ENCODE measurements at regions of chr7 and their contacts with region 1.

Region 1: DNA sequence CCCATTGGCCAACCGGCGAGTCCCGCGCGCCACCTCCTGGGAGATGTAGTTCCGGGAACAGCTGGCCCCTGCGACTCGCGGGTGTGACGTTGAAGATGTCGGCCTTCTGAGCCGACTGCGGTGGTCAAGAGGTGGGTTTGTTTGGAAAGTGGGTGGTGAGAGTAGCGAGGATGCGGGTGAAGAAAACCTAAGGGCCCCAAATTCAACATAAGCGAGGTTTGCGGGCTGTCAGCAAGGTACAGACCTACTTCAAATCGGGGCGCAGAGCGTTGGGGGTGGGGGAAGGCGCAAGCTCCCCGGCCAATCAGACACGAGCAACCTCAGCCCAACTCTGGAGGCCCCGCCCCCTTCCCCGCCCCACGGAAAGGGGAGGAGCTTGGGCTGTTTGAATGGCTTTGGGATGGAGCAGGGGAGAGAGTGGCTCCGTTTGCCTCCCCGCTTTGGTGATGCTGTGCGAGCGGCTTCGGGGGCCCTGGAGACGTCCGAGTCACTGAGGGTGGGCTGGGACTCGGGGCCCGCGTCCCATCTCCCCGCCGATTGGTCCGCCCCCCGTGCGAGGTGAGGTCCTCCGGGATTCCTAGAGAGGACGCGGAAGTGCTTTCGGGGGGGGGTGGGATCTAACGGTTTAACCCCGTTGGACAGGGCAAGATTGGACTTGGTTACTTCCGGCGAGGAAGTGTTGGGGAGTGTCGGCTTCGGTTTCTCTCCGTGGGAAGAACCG is at the start of gene ZKSCAN5:
- DNase-seq: peak; percentile 94
- ATAC-seq: peak; percentile 81
- H3K4me3 ChIP-seq: peak within 1 kb of the TSS; percentile 87 to 95
- H3K27ac ChIP-seq: peak within 1 kb of the TSS; percentile 82
- H3K4me1 ChIP-seq: peaks cover 11 to 23% of the 10 kb centered on the region in 2 experiments; a peak in 3 of 4 replicates
- H3K27me3 ChIP-seq: no peaks in the 10 kb centered on the region
- CTCF ChIP-seq: no peak
- POLR2A ChIP-seq: peak; percentile 76
- RAD21 ChIP-seq: no peak
- total RNA-seq, gene ZKSCAN5: 10.2 TPM

Region 2: GRCh38 chr7:99472561-99473243 is 32.1 kb before region 1 on chr7 and contains the start of gene ZNF789:
- CTCF ChIA-PET with region 1: interaction called, 3 read pairs
- POLR2A ChIA-PET with region 1: interaction called, 6 read pairs
- RAD21 ChIA-PET with region 1: no interaction called
- intact Hi-C with region 1: loop called (anchors 2 kb)
- DNase-seq: peak; percentile 92
- ATAC-seq: peak; percentile 95
- H3K4me3 ChIP-seq: peak within 1 kb of the TSS; percentile 81
- H3K27ac ChIP-seq: peak within 1 kb of the TSS; percentile 93
- H3K4me1 ChIP-seq: peaks cover 0 to 13% of the 10 kb centered on the region in 2 experiments; a peak in 2 of 4 replicates
- H3K27me3 ChIP-seq: no peaks in the 10 kb centered on the region
- CTCF ChIP-seq: no peak
- POLR2A ChIP-seq: peak; percentile 74
- RAD21 ChIP-seq: no peak
- total RNA-seq, gene ZNF789: 8.2 TPM

Region 3: DNA sequence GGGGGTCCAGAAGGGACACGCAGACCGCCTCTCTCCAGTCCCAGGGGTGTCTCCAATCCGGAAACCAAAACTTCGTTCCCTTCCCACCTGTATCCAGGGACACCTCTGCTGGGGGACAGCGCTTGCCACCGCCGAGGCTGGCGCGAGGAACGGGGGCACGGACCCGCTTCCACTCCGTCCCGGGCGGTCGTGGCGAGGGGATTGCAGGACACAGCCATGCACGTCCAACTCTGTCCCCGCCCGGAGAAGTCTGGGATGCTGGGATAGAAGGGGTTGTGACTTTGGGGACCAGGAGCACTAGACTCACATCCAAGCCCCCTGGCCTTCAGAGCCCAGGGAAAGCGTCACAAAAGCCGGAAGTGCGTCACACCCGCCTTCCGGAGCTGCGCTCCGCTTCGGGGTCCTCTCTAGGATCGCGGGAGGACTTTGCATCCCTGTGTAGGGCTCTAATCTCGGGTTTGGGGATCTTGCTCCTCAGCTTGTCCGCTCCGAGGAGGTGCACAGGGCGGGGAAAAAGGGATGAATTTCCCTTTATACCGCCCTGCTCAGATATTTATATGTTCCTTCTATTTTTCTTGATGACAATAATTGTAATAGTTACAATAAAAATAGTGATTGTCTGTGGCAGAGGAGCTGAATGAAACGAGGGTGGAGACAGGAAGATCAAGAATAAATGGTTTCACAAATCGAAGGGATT is 47.2 kb after region 1 on chr7 and contains the start of gene FAM200A:
- CTCF ChIA-PET with region 1: no interaction called
- POLR2A ChIA-PET with region 1: interaction called, 3 read pairs
- RAD21 ChIA-PET with region 1: no interaction called
- intact Hi-C with region 1: loop called (anchors 2 kb)
- DNase-seq: peak; percentile 92
- ATAC-seq: peak; percentile 98
- H3K4me3 ChIP-seq: peak within 1 kb of the TSS; percentile 69 to 79
- H3K27ac ChIP-seq: peak within 1 kb of the TSS; percentile 38
- H3K4me1 ChIP-seq: peaks cover 3 to 17% of the 10 kb centered on the region in 2 experiments; a peak in 3 of 4 replicates
- H3K27me3 ChIP-seq: no peaks in the 10 kb centered on the region
- CTCF ChIP-seq: no peak
- POLR2A ChIP-seq: peak; percentile 88
- RAD21 ChIP-seq: no peak
- total RNA-seq, gene FAM200A: 4.7 TPM

Region 4: GRCh38 chr7:99843808-99844207 is 339.0 kb after region 1 on chr7:
- CTCF ChIA-PET with region 1: no interaction called
- POLR2A ChIA-PET with region 1: no interaction called
- RAD21 ChIA-PET with region 1: no interaction called
- intact Hi-C with region 1: no loop called
- DNase-seq: no peak
- ATAC-seq: no peak
- H3K4me3 ChIP-seq: no peak overlapping the region
- H3K27ac ChIP-seq: no peak overlapping the region
- H3K4me1 ChIP-seq: no peaks in the 10 kb centered on the region
- H3K27me3 ChIP-seq: peaks cover 3% of the 10 kb centered on the region; the same call in 1 of the 2 replicates
- CTCF ChIP-seq: no peak
- POLR2A ChIP-seq: no peak
- RAD21 ChIP-seq: no peak